ENCODE measurements at regions of chr21 and their contacts with region 1.

Region 1: DNA sequence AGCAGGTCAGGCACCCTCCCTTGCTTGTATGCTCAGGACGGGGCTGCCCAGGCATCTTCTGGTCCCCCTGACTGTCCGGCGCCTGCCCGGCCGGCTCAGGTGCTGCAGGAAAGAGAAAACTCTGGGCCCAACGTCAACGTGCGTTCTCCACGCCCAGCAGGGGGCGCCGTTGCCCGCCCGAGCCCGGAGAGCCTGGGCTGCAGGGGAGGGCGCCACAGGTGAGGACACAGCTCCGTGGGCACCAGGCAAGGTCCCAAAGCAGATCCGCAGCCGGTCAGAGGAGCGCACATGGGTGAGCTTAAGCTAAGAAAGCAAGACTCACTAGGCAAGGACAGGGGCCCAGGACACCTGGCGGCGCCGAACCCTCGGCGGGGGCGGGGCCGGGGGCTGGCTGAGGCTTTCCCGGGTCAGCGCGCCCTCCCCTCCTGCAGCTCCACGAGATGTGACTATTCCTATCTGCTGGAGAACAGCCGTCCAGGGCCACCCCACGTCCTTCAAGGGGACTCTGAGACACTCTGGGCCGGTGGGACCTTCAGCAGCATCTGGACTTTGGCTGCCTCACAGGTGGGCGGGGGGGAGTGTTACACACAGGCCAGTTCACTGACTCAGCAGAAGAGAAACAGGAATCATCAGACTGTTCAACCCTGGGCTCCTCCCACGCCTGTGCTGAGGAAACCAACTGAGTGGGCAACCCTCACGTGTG is 29.3 kb downstream of the KRTAP10-1 start:
- DNase-seq: peak; percentile 69
- H3K4me3 Mint-ChIP-seq: no peak overlapping the region
- H3K27ac Mint-ChIP-seq: no peak overlapping the region
- H3K4me1 Mint-ChIP-seq: peaks cover 6% of the 10 kb centered on the region
- H3K27me3 Mint-ChIP-seq: peaks cover 23% of the 10 kb centered on the region
- CTCF ChIP-seq: peak; percentile 86

Region 2: DNA sequence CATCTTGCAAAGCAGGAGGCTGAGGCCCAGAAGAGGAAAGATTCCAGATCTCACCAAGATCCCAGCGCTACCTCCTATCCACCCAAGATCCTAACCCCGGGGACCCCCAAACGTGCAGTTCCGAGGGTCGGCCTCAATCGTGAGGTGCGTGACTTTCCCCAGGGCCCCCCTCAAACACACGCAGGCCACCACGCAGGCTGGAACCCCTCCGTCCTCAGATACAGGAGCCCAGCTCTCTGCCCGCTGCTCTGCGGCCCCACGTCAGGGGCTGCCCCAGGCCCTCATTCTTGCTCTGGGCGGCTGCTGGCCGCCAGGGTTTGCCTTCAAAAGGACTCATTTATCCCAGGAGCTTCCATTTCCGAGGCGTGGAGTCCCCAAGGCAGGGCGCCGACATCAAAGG is 10.5 kb before region 1 on chr21:
- CTCF ChIA-PET with region 1: interaction called, 10 read pairs
- POLR2A ChIA-PET with region 1: no interaction called
- intact Hi-C with region 1: no loop called
- DNase-seq: no peak
- H3K4me3 Mint-ChIP-seq: no peak overlapping the region
- H3K27ac Mint-ChIP-seq: no peak overlapping the region
- H3K4me1 Mint-ChIP-seq: no peaks in the 10 kb centered on the region
- H3K27me3 Mint-ChIP-seq: peaks cover 22% of the 10 kb centered on the region
- CTCF ChIP-seq: no peak

Region 3: DNA sequence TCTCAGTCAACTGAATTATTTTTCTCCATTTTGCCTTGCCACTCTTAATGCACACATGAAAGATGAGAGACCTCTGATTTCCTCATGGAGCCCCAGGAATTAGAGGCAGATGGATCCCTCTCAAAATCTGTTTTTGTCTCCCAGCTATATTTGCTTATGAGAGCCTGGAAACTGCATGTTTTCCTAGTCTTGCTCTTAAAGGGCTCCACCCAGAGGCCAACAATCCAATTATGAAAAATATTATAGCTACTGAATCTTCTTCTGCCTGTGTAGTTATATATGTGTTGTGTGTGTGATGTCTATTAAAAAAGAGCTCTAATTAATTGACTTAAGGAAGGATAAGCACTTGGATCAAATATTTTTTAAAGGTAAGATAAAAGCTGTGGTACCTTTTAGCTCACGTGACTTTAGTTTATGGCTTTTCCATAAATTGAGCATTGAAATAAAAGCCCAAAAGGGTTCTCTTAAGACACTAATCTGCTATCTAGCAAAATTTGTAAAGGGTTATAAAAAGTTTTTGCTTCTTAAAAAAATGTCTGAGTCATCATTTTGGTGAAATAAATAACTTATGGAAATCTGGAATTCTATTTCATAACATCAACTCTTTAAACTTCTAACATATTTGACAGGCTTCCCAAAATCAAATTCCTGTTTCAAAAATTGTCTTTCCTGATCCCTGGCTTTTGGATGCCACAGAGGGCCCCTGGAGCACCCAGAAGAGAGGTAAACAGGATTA is 231.9 kb after region 1 on chr21:
- CTCF ChIA-PET with region 1: interaction called, 60 read pairs
- POLR2A ChIA-PET with region 1: interaction called, 3 read pairs
- intact Hi-C with region 1: loop called (anchors 1 kb)
- DNase-seq: peak; percentile 43
- H3K4me3 Mint-ChIP-seq: no peak overlapping the region
- H3K27ac Mint-ChIP-seq: no peak overlapping the region
- H3K4me1 Mint-ChIP-seq: no peaks in the 10 kb centered on the region
- H3K27me3 Mint-ChIP-seq: no peaks in the 10 kb centered on the region
- CTCF ChIP-seq: peak; percentile 41

Region 4: DNA sequence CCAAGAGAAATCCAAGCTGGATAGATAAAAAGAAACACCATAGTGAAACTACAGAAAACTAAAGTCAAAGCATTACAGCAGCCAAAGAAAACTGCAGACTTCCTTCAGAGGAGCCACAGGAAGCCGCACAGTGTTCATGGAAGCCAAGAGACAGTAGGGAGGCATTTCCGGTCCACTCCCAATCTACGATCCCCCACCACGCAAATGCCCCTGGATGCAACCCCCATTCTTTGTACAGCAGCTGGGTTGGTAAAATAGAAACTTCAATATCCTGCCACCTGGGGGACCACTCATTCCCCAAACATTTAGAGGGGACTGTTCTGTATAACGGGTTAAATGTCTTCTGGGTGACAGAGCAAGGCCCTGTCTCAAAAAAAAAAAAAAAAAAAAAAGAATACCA is 244.6 kb after region 1 on chr21:
- CTCF ChIA-PET with region 1: interaction called, 12 read pairs
- POLR2A ChIA-PET with region 1: no interaction called
- intact Hi-C with region 1: no loop called
- DNase-seq: peak; percentile 21
- H3K4me3 Mint-ChIP-seq: no peak overlapping the region
- H3K27ac Mint-ChIP-seq: no peak overlapping the region
- H3K4me1 Mint-ChIP-seq: peaks cover 10% of the 10 kb centered on the region
- H3K27me3 Mint-ChIP-seq: peaks cover 9% of the 10 kb centered on the region
- CTCF ChIP-seq: peak; percentile 25

Region 5: GRCh38 chr21:44792702-44793591 is 282.3 kb after region 1 on chr21:
- CTCF ChIA-PET with region 1: interaction called, 32 read pairs
- POLR2A ChIA-PET with region 1: no interaction called
- intact Hi-C with region 1: loop called (anchors 1 kb)
- DNase-seq: peak; percentile 58
- H3K4me3 Mint-ChIP-seq: no peak overlapping the region
- H3K27ac Mint-ChIP-seq: peak overlapping the region; percentile 23
- H3K4me1 Mint-ChIP-seq: peaks cover 9% of the 10 kb centered on the region
- H3K27me3 Mint-ChIP-seq: no peaks in the 10 kb centered on the region
- CTCF ChIP-seq: peak; percentile 68

Measured in MCF 10A (cell line).